PC-3 (cell line): ENCODE measurements at regions of chr9 and their contacts with region 1.

Region 1: GRCh38 chr9:34218446-34218845 is 39.6 kb downstream of the UBAP1 start:
- DNase-seq: no peak
- ATAC-seq: no peak
- H3K4me3 ChIP-seq: no peak overlapping the region
- H3K27ac ChIP-seq: no peak overlapping the region
- H3K4me1 ChIP-seq: peaks cover 13% of the 10 kb centered on the region
- H3K27me3 ChIP-seq: no peaks in the 10 kb centered on the region
- CTCF ChIP-seq: no peak

Region 2: GRCh38 chr9:34185778-34186551 is 32.5 kb before region 1 on chr9:
- CTCF ChIA-PET with region 1: no interaction called
- POLR2A ChIA-PET with region 1: no interaction called
- intact Hi-C with region 1: loop called (anchors 1 kb)
- DNase-seq: peak; percentile 93
- ATAC-seq: peak; percentile 93
- H3K4me3 ChIP-seq: peak overlapping the region; percentile 40; the same call in 1 of the 2 replicates
- H3K27ac ChIP-seq: peak overlapping the region; percentile 95
- H3K4me1 ChIP-seq: peaks cover 18% of the 10 kb centered on the region
- H3K27me3 ChIP-seq: no peaks in the 10 kb centered on the region
- CTCF ChIP-seq: no peak